Right ventricle myocardium superior (tissue), 1 donor: ENCODE measurements at regions of chr17 and their contacts with region 1.

Region 1: DNA sequence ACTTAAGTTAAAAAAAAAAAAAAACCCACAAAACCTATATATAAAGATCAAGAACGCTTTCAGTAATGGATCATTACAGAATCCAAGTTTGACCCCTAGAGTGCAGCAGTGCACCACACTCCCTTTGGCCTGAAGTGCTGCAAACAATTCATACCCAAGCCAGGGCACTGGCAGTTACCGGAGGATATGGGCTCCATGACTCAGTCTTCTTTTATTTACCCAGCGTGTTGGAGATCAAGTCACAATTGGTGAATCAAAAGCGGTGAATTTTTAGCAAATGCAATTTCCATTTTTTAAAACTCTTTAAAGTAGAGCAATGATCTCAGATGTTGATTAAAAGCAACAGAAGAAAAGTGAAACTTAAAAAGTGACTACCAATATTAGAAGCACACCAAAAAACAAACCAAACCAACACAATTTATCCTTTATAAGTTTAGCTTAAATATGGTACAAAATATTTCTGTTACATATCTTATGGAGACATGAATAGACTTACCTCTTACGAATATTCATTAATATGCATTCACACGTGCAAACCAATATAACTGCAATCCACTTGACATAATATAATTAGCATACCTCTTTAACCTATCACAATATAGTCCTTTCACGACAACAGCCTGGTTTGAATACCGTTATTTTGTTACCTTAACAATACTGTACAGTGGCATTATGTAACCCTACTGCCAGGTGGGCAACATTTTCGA is 46.3 kb downstream of the ZNF652 start:
- DNase-seq: peak; percentile 68
- ATAC-seq: peak; percentile 99

Region 2: GRCh38 chr17:49390548-49391324 is 75.0 kb after region 1 on chr17:
- intact Hi-C with region 1: loop called (anchors 1 kb)
- DNase-seq: peak; percentile 50
- ATAC-seq: peak; percentile 57

Region 3: GRCh38 chr17:49556223-49556971 is 240.7 kb after region 1 on chr17:
- intact Hi-C with region 1: loop called (anchors 5 kb)
- DNase-seq: peak; percentile 87
- ATAC-seq: peak; percentile 95